AG04449 (cell line): ENCODE measurements at regions of chr1 and their contacts with region 1.

Region 1: GRCh38 chr1:241611063-241611462 is 29.1 kb downstream of the CHML start:
- DNase-seq: no peak
- H3K4me3 ChIP-seq: no peak overlapping the region
- CTCF ChIP-seq: peak; percentile 44

Region 2: GRCh38 chr1:241336335-241336734 is 274.7 kb before region 1 on chr1:
- CTCF ChIA-PET with region 1: no interaction called
- POLR2A ChIA-PET with region 1: no interaction called
- DNase-seq: peak; percentile 3
- H3K4me3 ChIP-seq: no peak overlapping the region
- CTCF ChIP-seq: no peak

Region 3: DNA sequence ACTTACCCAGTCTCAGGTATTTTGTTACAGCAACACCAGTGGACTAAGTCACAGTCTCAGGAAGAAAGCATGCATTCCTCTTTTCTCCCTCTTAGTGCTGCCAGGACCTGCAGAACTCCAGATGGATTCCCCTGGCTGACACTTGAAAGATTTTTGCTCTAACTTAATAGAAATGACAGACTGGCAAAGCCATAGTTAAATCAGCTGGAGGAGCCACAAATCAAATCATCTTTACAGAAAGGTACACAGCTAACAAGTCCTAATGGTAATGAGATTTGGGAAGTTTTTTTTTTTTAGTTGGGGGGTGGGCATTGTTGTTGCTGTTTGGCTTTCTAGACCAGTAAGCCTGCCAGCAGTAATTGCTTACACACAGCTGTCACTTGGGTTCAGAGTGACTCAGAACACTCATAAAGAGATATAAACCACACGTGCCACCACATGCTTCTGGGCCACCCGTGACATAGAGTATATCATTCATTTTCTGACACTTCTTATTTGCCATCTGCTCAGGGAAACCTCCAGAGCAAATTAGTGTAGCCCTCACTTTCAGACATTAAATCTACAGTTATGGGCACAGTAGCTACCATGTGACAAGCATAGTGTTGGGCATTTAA is 163.9 kb before region 1 on chr1:
- CTCF ChIA-PET with region 1: no interaction called
- POLR2A ChIA-PET with region 1: no interaction called
- DNase-seq: no peak
- H3K4me3 ChIP-seq: no peak overlapping the region
- CTCF ChIP-seq: no peak

Region 4: GRCh38 chr1:241531195-241532161 is 79.6 kb before region 1 on chr1:
- CTCF ChIA-PET with region 1: interaction called, 11 read pairs
- POLR2A ChIA-PET with region 1: interaction called, 3 read pairs
- DNase-seq: peak; percentile 47
- H3K4me3 ChIP-seq: peak overlapping the region; percentile 44
- CTCF ChIP-seq: peak; percentile 26

Region 5: GRCh38 chr1:241600496-241600901 is 10.6 kb before region 1 on chr1:
- CTCF ChIA-PET with region 1: interaction called, 24 read pairs
- POLR2A ChIA-PET with region 1: no interaction called
- DNase-seq: no peak
- H3K4me3 ChIP-seq: no peak overlapping the region
- CTCF ChIP-seq: no peak

Region 6: GRCh38 chr1:241688940-241689368 is 77.9 kb after region 1 on chr1:
- CTCF ChIA-PET with region 1: no interaction called
- POLR2A ChIA-PET with region 1: no interaction called
- DNase-seq: no peak
- H3K4me3 ChIP-seq: no peak overlapping the region
- CTCF ChIP-seq: no peak

Region 7: DNA sequence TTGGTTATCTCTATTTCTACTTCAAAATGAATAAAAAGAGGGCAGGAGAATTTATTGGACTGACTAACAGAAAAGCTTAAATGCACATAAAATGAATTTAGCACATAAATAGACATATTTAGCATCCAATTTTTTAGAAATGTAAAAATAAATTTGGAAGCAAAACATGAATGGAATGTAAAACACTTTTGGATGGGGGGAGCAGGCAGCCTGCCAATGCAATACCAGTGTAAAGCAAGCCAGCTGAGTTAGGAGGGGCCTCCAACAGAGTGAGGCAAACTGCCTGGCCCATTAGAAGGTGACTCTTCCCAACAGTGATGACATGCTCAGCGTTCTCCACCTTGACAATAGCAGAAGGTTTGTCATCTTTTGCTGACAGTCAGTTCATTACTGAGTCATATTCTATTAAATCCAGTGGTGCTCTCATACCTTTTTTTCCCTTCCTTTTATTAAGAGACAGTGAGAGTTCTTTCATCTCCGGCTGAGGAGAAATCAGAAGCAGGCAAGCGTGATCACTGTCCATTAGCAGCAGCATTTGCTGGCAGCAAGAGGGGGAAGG is 217.5 kb after region 1 on chr1:
- CTCF ChIA-PET with region 1: interaction called, 73 read pairs
- POLR2A ChIA-PET with region 1: no interaction called
- DNase-seq: no peak
- H3K4me3 ChIP-seq: no peak overlapping the region
- CTCF ChIP-seq: no peak

Region 8: DNA sequence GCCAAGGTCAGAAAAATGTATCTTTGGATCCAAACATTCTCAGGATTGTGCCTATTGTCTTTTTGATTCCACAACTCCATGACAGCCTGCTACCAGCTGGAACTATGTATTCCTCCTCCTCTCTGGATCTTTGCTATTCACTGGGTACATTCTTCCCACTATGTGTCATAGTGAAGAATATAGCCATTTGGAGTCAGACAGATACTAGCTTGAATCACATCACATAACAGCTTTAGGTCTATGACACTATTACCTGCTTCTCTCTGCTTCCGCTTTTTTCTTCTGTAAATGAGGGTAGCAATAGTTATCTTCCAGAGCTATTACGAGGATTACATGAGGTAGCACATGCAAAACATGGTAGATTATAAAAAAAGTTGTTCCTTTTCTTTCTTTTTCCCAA is 231.5 kb after region 1 on chr1:
- CTCF ChIA-PET with region 1: interaction called, 46 read pairs
- POLR2A ChIA-PET with region 1: interaction called, 3 read pairs
- DNase-seq: no peak
- H3K4me3 ChIP-seq: no peak overlapping the region
- CTCF ChIP-seq: no peak

Region 9: GRCh38 chr1:241985787-241986186 is 374.7 kb after region 1 on chr1:
- CTCF ChIA-PET with region 1: interaction called, 19 read pairs
- POLR2A ChIA-PET with region 1: no interaction called
- DNase-seq: no peak
- H3K4me3 ChIP-seq: no peak overlapping the region
- CTCF ChIP-seq: peak; percentile 43